T-cell (primary cell): ENCODE measurements at regions of chr10 and their contacts with region 1.

Region 1: GRCh38 chr10:126393159-126393475 is 4.8 kb upstream of the ADAM12 start:
- DNase-seq: no peak
- ATAC-seq: no peak
- H3K4me3 ChIP-seq: no peak overlapping the region
- H3K4me3 Mint-ChIP-seq: no peak overlapping the region
- H3K27ac ChIP-seq: no peak overlapping the region
- H3K27ac Mint-ChIP-seq: no peak overlapping the region
- H3K4me1 ChIP-seq: no peaks in the 10 kb centered on the region
- H3K4me1 Mint-ChIP-seq: peaks cover 0 to 7% (median 0%) of the 10 kb centered on the region in 3 donors
- H3K27me3 ChIP-seq: peaks cover 9 to 13% of the 10 kb centered on the region in 2 experiments
- H3K27me3 Mint-ChIP-seq: peaks cover 11 to 14% of the 10 kb centered on the region in 2 donors

Region 2: GRCh38 chr10:126101801-126102200 is 291.3 kb before region 1 on chr10:
- CTCF ChIA-PET with region 1: no interaction called
- POLR2A ChIA-PET with region 1: no interaction called
- DNase-seq: no peak
- ATAC-seq: no peak
- H3K4me3 ChIP-seq: no peak overlapping the region
- H3K4me3 Mint-ChIP-seq: no peak overlapping the region
- H3K27ac ChIP-seq: no peak overlapping the region
- H3K27ac Mint-ChIP-seq: no peak overlapping the region
- H3K4me1 ChIP-seq: no peaks in the 10 kb centered on the region
- H3K4me1 Mint-ChIP-seq: no peaks in the 10 kb centered on the region
- H3K27me3 ChIP-seq: no peaks in the 10 kb centered on the region
- H3K27me3 Mint-ChIP-seq: peaks cover 1 to 3% of the 10 kb centered on the region in 2 donors

Region 3: DNA sequence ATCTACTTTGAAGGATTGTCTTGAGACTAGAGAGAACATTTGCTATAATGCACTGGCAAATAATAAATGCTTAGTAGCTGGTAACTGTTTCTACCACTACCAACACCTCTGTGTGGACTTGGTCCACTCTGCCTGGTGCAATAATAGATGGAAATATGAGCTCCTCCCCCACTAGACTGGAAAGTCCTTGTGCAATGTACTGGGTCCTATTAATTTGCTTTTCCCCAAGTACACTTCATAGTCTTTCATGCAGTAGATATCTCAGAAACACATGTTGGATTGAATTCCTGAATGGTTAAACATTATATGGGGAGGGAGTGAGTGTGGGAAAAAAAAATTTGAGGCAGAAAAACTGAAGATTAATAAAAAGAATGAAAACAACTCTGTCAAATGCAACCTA is 158.1 kb after region 1 on chr10:
- CTCF ChIA-PET with region 1: no interaction called
- POLR2A ChIA-PET with region 1: interaction called in 1 of 2 experiments, 19 read pairs
- DNase-seq: no peak
- ATAC-seq: no peak
- H3K4me3 ChIP-seq: no peak overlapping the region
- H3K4me3 Mint-ChIP-seq: no peak overlapping the region
- H3K27ac ChIP-seq: no peak overlapping the region
- H3K27ac Mint-ChIP-seq: no peak overlapping the region
- H3K4me1 ChIP-seq: no peaks in the 10 kb centered on the region
- H3K4me1 Mint-ChIP-seq: no peaks in the 10 kb centered on the region
- H3K27me3 ChIP-seq: no peaks in the 10 kb centered on the region
- H3K27me3 Mint-ChIP-seq: no peaks in the 10 kb centered on the region